ENCODE measurements at regions of chr6 and their contacts with region 1.

Region 1: DNA sequence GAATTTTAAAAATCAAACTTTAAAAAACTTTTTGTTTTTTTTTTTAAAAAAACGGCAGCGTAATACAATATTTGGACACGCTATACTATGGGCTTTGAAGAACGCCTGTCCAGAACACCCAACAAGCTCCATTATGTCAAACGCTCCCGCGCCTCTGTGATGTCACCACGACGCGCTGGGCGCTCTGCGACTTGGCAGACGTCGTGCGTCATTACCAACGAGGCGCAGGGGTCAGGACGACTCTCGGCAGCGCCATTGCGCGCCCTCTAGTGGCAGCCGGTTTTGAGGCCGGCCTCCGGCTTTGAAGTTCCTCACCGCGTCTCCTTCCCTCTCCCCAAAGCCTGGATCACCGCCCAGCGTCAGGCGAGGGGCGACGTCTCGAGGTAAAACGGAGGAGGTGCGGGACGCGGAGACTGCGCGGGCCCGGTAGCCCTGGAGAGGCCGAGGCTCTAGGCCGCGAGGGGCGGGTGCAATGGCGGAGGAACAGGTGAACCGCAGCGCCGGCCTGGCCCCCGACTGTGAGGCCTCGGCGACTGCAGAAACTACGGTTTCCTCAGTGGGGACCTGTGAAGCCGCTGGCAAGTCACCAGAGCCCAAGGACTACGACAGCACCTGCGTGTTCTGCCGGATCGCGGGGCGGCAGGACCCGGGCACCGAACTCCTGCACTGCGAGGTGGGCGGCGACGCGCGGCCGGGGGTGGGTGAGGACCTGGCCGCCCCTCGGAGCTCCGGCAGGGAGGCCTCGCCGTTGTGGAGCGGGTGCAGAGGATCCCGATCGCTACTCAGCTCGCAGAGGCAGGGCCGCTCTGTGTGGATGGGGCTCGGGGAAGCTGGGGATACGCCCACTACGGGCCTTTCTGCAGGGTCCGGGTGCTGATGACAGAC is at the start of gene HINT3:
- DNase-seq: peak; percentile 95
- CTCF ChIP-seq: peak; percentile 94

Region 2: DNA sequence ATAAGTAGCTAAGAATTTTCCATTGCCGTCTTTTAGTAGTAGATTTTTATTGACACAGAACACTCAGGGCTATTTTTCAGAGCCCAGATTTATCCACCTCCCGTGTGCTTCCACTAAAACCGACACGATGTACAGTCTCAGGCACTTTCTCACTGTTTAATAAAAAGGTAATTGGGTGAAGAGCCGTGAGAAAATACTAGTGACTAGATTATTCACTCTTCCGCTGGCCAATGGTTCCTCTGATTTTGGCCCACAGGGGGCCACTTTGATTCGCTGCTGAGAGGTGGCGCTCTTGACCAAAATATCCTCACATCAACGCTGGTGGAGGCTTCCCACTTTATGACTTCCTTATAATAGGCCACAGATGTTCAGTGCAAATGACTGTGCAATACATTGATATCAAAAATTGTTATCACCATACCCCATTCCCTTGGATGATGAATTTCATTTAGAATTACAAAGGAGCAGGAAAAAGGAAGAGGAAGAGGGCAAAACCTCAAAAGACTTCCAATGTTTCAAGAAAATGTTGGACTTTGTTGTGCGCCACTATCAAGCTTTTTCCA is 642.6 kb before region 1 on chr6:
- CTCF ChIA-PET with region 1: interaction called, 16 read pairs
- POLR2A ChIA-PET with region 1: no interaction called
- DNase-seq: peak; percentile 41
- CTCF ChIP-seq: peak; percentile 85

Region 3: DNA sequence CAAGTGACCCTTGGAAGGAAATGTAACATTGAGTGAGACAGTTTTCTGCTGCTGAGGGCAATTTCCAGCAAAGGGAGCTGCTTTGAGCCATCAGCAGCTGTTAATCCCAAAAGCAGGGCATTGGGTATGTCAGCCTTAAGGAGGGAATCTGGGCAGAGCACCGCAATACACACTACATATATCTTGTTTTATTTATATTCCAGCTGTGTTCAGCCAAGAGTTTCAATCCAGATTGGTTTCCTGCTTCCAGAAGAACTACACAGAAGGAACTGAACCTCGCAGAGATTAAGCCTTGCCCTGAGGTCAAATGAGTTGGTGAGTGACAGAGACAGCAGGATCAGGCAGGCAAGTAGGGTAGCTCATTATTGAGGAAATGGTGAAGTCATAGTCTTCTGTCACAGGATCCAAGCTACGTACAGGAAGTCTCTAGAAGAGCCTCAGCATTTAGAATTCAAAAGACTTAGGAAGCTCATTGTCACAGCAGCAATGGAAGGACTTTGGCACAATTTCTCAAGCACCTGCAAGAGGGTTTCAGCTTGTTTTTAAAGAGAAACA is 317.2 kb before region 1 on chr6:
- CTCF ChIA-PET with region 1: no interaction called
- POLR2A ChIA-PET with region 1: no interaction called
- DNase-seq: no peak
- CTCF ChIP-seq: no peak

Region 4: DNA sequence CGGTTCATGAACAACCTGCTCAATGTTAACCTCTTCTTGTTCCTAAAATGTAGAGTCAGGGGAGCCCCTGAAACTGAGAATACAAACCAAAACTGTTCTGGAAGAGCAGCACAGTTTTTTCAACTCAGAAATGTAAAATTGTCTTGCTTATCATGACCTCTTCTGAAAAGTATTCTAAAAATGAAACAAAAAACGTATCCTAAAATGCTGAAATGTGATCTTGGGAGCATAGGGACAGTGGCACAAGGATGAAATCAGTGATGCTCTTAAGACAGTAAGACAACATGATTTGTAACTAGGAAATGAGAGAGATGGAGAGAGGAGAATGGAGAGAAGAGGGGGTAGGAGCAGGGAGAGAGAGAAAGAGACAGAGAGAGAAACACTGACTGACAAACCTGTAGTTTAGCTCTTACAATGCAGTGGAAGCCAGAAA is 138.5 kb before region 1 on chr6:
- CTCF ChIA-PET with region 1: interaction called, 12 read pairs
- POLR2A ChIA-PET with region 1: interaction called, 9 read pairs
- DNase-seq: no peak
- CTCF ChIP-seq: no peak

Region 5: GRCh38 chr6:125899726-125900182 is 57.0 kb before region 1 on chr6:
- CTCF ChIA-PET with region 1: interaction called, 33 read pairs
- POLR2A ChIA-PET with region 1: interaction called, 4 read pairs
- DNase-seq: no peak
- CTCF ChIP-seq: no peak

Region 6: DNA sequence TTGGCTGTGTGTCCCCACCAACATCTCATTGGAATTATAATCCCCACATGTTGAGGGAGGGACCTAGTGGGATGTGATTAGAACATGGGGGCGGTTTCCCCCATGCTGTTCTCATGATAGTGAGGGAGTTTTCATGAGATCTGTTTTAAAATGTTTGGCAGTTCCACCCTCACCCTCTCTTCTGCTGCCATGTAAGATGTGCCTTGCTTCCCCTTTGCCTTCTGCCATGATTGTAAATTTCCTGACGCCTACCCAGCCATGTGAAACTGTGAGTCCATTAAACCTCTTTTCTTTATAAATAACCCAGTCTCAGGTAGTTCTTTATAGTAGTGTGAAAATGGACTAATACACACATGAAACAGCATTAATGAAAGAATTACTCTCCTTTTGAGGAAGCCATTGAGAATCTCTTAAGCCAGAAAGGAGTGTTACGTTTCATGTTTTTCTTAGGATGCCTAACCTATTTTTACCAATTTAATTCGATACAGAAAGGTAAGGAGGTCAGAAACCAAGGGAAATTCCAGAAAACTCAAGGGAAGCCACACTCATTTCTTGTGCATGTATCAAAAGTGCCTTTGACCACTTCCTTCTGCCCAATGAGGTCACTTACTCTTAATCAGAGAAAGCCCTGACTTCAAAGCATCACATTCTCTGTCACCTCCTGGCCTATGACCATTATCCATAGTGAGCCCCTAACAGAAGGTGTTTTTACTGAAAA is 24.9 kb before region 1 on chr6:
- CTCF ChIA-PET with region 1: interaction called, 11 read pairs
- POLR2A ChIA-PET with region 1: no interaction called
- DNase-seq: peak; percentile 19
- CTCF ChIP-seq: no peak

Region 7: DNA sequence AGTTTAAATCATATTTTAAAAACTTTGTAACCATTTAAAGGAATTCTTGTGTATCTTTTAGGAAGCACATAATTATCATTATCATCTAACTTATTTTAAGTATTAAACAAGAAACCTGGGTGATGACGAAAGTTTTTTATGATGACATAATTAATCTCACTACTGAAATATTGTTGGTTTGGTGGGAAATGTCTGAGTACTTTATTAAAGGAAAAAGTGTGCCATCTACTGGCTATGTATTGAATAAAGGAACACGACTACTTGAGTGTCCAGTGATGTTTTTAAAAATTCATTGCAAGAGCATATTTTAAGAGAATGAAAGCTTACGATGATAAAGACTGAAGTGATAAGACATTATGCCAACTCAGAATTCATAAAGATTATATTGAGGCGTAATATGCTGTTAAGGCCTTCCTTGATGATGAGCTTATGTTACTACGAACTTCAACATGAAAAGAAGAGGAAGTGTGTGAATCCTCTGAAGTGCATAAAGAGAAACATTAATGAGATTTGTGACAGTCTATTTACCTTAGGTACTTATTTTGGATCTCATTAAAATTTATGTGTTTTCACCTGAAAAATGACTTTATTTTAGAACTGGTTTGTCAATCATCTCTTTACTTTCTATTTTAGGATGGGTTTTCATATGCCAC is 17.6 kb after region 1 on chr6:
- CTCF ChIA-PET with region 1: interaction called, 53 read pairs
- POLR2A ChIA-PET with region 1: interaction called, 3 read pairs
- DNase-seq: peak; percentile 46
- CTCF ChIP-seq: peak; percentile 50

Region 8: GRCh38 chr6:126094411-126094810 is 137.7 kb after region 1 on chr6:
- CTCF ChIA-PET with region 1: no interaction called
- POLR2A ChIA-PET with region 1: no interaction called
- DNase-seq: no peak
- CTCF ChIP-seq: no peak

Region 9: DNA sequence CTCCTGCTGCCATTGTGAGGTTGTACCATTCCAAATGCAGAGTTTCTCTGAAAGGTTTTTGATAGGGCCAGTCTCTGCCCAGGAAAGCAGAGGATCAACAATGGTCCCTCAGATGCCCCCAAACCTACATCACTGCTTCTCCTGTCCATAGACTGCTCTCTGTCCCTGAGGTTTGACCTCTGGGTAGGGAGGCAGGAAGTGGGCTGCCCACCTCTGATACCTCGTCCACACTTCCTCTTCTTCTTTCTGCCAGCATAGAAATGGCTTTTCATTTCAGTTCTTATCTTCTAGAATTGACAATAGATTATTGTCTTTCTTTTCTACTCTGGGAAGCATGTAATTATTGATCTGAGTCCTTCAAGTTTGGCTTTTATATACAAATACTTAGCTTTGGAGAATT is 200.2 kb after region 1 on chr6:
- CTCF ChIA-PET with region 1: no interaction called
- POLR2A ChIA-PET with region 1: no interaction called
- DNase-seq: peak; percentile 15
- CTCF ChIP-seq: no peak

Measured in GM10248 (cell line).